Gastrocnemius medialis (tissue), 4 donors: ENCODE measurements at regions of chr17 and their contacts with region 1.

Region 1: DNA sequence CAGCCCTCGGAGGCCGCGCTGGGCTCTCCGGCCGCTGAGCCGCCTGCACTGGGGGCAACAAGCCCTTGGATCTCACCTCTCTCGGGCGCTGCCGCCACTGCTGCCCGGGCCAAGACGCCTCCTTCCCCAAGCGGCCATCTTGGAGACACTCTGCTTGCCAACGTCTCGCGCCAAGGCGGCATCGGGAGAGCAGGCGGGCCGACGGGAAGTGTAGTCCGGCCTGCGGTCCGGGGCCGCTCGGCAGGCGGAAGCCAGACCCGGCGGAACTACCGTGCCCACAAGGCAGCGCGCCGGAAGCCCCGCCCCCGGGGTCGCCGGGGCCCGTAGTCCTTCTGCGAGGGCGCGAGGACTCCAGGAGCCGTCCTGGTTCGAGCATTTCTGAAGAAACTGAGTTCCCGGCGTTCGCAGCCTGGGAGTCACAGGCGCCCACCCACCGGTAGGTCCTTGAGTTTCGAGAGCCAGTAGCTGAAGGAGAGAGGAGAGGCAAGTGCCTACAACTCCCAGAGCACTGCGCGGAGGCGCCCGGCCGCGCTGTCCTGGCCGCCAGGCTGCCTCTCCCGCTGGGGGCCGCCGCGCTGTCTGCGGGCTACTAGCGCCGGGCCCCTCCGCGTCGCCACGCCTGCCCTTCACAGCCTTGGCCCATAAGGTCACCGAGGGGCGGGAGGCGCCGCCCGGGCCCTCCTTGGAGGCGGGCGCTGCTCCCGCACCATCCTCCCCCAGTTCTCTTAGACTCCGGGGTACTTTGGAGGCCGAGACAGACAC is at the start of gene TMEM11:
- DNase-seq: peak; percentile 95
- ATAC-seq: peak; percentile 51 to 57
- H3K4me3 ChIP-seq: peak within 1 kb of the TSS; percentile 80 to 99 (median 93)
- H3K27ac ChIP-seq: peak within 1 kb of the TSS; percentile 92 to 98 (median 96)
- H3K4me1 ChIP-seq: peaks cover 57 to 58% of the 10 kb centered on the region in 2 donors
- H3K27me3 ChIP-seq: no peaks in the 10 kb centered on the region
- CTCF ChIP-seq: peak in 2 of 5 experiments; percentile 15 to 34
- POLR2A ChIP-seq: peak; percentile 84 to 93
- total RNA-seq, gene TMEM11: 70.6 to 131 (median 90.9) TPM

Region 2: DNA sequence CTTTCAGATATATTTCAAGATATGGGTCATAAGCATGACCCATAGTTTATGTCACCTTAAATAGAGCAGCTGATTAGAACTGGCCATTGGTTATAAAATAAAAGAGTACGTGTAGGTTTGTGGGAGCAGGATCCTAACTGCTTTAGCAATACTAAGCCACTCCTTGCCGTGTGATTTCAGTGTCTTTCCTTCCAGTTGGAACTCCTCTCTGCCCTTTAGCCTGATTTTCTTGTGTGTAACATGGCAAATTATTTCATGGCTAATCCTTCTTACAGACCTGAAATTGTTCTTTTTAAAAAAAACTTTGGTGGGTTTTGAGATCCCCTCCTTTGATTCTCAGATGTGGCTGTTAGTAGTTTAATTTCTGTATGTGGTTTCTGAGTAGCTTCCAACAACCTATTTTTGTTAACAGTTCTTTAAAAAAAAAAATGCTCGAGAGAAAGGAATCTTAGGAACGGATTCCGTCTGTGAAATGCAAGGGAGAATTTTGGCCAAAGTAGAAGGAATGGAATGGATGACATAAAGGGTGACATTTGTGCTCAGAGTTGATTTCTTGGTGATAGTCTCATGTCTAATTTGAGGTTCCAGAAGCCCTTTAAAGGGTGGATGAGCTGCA is 47.5 kb before region 1 on chr17:
- in situ Hi-C with region 1: no loop called
- intact Hi-C with region 1: loop called (anchors 2 kb)
- DNase-seq: no peak
- ATAC-seq: peak; percentile 53 to 63
- H3K4me3 ChIP-seq: peak overlapping the region; percentile 34 to 42 (median 36)
- H3K27ac ChIP-seq: peak overlapping the region; percentile 92 to 98 (median 96)
- H3K4me1 ChIP-seq: peaks cover 84 to 89% of the 10 kb centered on the region in 2 donors
- H3K27me3 ChIP-seq: no peaks in the 10 kb centered on the region
- CTCF ChIP-seq: no peak
- POLR2A ChIP-seq: no peak

Region 3: DNA sequence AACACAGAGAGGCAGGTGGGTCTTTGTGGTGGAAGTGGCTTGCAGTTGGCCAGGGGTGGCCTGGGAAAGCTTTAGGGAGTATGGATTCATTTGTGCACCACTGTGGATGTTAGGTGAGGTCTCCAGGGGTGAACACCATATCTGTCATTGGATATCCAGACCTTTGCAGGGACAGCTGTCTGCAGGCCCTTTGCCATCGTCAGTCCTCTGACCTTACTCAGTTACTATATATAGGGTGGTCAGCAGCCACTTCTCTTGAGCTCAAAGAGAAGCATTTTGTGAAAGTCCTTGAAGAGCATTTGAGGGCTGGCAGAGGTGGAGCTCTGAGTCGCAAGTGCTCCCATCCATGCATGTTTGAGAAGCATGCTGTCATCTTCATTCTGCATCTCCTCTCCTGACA is 40.7 kb before region 1 on chr17:
- in situ Hi-C with region 1: no loop called
- intact Hi-C with region 1: loop called (anchors 1 kb)
- DNase-seq: peak; percentile 77 to 91
- ATAC-seq: peak; percentile 88 to 92
- H3K4me3 ChIP-seq: no peak overlapping the region
- H3K27ac ChIP-seq: peak overlapping the region; percentile 92 to 98 (median 96)
- H3K4me1 ChIP-seq: peaks cover 64 to 66% of the 10 kb centered on the region in 2 donors
- H3K27me3 ChIP-seq: no peaks in the 10 kb centered on the region
- CTCF ChIP-seq: no peak
- POLR2A ChIP-seq: peak in 1 of 2 donors; percentile 17

Region 4: GRCh38 chr17:21239680-21240368 is 25.6 kb after region 1 on chr17:
- in situ Hi-C with region 1: no loop called
- intact Hi-C with region 1: loop called (anchors 2 kb)
- DNase-seq: no peak
- ATAC-seq: peak in 1 of 2 donors; percentile 20
- H3K4me3 ChIP-seq: no peak overlapping the region
- H3K27ac ChIP-seq: peak overlapping the region; percentile 89 to 95 (median 92)
- H3K4me1 ChIP-seq: peaks cover 33 to 47% of the 10 kb centered on the region in 2 donors
- H3K27me3 ChIP-seq: no peaks in the 10 kb centered on the region
- CTCF ChIP-seq: peak; percentile 16 to 58 (median 46)
- POLR2A ChIP-seq: no peak

Region 5: GRCh38 chr17:21252796-21253645 is 38.8 kb after region 1 on chr17 and contains the start of gene NATD1:
- in situ Hi-C with region 1: no loop called
- intact Hi-C with region 1: loop called (anchors 2 kb)
- DNase-seq: peak; percentile 88 to 93
- ATAC-seq: peak; percentile 67 to 79
- H3K4me3 ChIP-seq: peak within 1 kb of the TSS; percentile 66 to 80 (median 70)
- H3K27ac ChIP-seq: peak within 1 kb of the TSS; percentile 89 to 95 (median 92)
- H3K4me1 ChIP-seq: peaks cover 45 to 51% of the 10 kb centered on the region in 2 donors
- H3K27me3 ChIP-seq: no peaks in the 10 kb centered on the region
- CTCF ChIP-seq: no peak
- POLR2A ChIP-seq: peak; percentile 86 to 91
- total RNA-seq, gene NATD1: 10.1 to 21.2 (median 15.5) TPM

Region 6: GRCh38 chr17:21275579-21276263 is 61.5 kb after region 1 on chr17:
- in situ Hi-C with region 1: no loop called
- intact Hi-C with region 1: loop called (anchors 2 kb)
- DNase-seq: peak; percentile 88 to 93
- ATAC-seq: peak; percentile 74 to 76
- H3K4me3 ChIP-seq: peak overlapping the region; percentile 59 to 80 (median 64)
- H3K27ac ChIP-seq: peak overlapping the region; percentile 75 to 94 (median 82)
- H3K4me1 ChIP-seq: peaks cover 31 to 33% of the 10 kb centered on the region in 2 donors
- H3K27me3 ChIP-seq: no peaks in the 10 kb centered on the region
- CTCF ChIP-seq: no peak
- POLR2A ChIP-seq: peak; percentile 71 to 80

Region 7: GRCh38 chr17:21284319-21285163 is 70.3 kb after region 1 on chr17 and contains the start of gene MAP2K3:
- in situ Hi-C with region 1: no loop called
- intact Hi-C with region 1: loop called (anchors 2 kb)
- DNase-seq: peak; percentile 100
- ATAC-seq: peak; percentile 29 to 35
- H3K4me3 ChIP-seq: peak within 1 kb of the TSS; percentile 72 to 88 (median 84)
- H3K27ac ChIP-seq: peak within 1 kb of the TSS; percentile 94 to 99 (median 97)
- H3K4me1 ChIP-seq: peaks cover 58 to 62% of the 10 kb centered on the region in 2 donors
- H3K27me3 ChIP-seq: no peaks in the 10 kb centered on the region
- CTCF ChIP-seq: no peak
- POLR2A ChIP-seq: peak; percentile 98 to 99
- total RNA-seq, gene MAP2K3: 15.7 to 170 (median 63.8) TPM

Region 8: DNA sequence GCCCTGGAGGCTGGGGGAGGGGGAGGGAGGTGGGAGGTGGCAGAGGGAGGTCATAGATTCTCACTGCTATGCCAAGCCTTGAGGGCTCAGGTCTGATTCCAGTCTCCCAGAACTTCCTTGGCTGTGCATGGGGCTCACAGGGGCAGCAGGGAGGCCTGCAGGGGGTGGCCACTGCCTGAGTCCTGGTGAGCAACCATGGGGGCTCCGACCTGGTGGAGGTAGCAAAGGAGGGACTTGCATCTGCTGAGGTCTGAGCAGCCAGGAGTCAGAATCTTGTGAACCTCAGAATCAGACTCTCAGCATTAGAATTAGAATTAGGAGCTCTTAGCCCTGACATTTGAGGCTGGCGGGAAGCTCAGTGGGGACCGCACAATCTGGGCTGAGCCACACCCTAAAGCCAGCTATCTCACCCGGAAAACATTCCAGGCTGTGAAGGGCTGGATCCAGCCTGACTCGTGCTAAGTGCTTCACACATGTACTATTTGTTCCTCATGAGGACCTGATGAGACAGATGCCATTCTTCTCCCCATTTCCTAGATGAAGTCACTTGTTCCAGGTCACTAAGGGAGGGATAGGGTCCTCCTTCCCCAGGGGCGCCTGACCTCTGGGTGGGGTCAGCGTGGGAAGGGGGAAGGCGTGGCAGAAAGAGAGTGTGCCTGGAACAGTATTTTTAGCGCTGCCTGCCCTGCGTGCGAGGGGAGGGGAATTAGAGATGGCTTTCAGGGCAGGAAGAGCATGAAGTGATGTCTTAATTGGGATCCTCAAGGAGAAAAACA is 144.7 kb after region 1 on chr17:
- in situ Hi-C with region 1: no loop called
- intact Hi-C with region 1: no loop called
- DNase-seq: no peak
- ATAC-seq: peak in 1 of 2 donors; percentile 50
- H3K4me3 ChIP-seq: no peak overlapping the region
- H3K27ac ChIP-seq: no peak overlapping the region
- H3K4me1 ChIP-seq: no peaks in the 10 kb centered on the region
- H3K27me3 ChIP-seq: no peaks in the 10 kb centered on the region
- CTCF ChIP-seq: no peak
- POLR2A ChIP-seq: no peak